Activated naive CD8-positive, alpha-beta T cell treated with anti-CD3 and anti-CD28 coated beads, Interleukin-2, amount 10 ng/mL, durations not matched to agents 7 days and 5 days (primary cell): ENCODE measurements at regions of chr4 and their contacts with region 1.

Region 1: GRCh38 chr4:25159884-25160713 is at the start of gene SEPSECS:
- DNase-seq: peak; percentile 87
- ATAC-seq: peak; percentile 87
- H3K4me3 Mint-ChIP-seq: peak within 1 kb of the TSS; percentile 95
- H3K27ac Mint-ChIP-seq: peak within 1 kb of the TSS; percentile 93
- H3K4me1 Mint-ChIP-seq: peaks cover 22% of the 10 kb centered on the region
- H3K27me3 Mint-ChIP-seq: no peaks in the 10 kb centered on the region
- total RNA-seq, gene SEPSECS: 15.1 to 15.5 TPM

Region 2: DNA sequence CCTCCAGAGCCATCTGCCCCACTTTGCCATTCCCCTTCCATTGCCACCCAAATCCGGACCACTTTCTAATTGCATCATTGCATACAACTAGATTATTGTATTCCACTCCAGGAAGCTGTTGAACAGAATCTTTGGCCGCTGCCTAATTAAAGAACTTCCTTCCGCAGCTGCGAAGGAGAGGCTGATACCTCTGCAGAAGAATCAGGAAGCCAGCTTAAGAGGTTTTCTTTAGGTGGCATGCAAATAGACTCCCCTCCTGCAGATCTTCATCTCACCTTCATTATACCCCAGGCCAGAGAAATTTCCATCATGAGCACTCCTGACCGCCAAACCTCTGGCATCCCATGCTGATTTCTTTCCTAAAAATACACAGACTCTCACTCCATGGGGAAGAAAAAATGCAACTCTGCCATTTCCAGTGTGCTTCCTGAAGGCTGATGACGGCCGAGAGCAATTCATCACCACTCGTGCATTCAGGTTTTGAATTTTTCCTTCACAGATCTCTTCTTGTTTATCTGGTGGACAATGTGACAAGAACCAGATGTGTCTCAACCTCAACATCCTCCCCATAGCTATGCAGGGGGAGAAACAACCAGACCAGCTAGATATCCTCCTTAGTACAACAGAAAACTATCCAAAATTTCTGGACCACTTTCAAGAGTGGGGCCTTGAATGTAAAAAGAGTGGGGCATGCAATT is 160.6 kb before region 1 on chr4:
- POLR2A ChIA-PET with region 1: no interaction called
- DNase-seq: no peak
- ATAC-seq: no peak
- H3K4me3 Mint-ChIP-seq: peak overlapping the region; percentile 4
- H3K27ac Mint-ChIP-seq: no peak overlapping the region
- H3K4me1 Mint-ChIP-seq: peaks cover 3% of the 10 kb centered on the region
- H3K27me3 Mint-ChIP-seq: peaks cover 15% of the 10 kb centered on the region

Region 3: DNA sequence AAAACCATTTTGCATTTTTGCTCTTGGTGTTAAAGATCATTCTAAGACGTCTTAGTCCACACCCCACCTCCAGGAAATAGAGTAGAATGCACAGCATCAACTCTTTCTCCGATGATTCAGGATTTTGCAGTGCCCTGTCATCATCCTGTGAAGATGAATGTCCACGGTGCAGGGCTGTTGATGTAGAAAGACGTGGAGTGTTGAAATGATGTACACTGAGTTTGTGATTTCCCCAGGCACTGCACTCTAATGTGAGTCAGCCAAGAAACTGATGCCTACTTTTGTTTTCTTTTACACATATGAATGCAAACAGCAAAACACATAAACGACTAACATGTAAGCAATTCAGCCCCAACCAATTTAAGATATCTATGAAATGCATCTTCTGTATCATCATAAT is 139.9 kb before region 1 on chr4:
- POLR2A ChIA-PET with region 1: no interaction called
- DNase-seq: no peak
- ATAC-seq: no peak
- H3K4me3 Mint-ChIP-seq: no peak overlapping the region
- H3K27ac Mint-ChIP-seq: no peak overlapping the region
- H3K4me1 Mint-ChIP-seq: no peaks in the 10 kb centered on the region
- H3K27me3 Mint-ChIP-seq: peaks cover 5% of the 10 kb centered on the region

Region 4: DNA sequence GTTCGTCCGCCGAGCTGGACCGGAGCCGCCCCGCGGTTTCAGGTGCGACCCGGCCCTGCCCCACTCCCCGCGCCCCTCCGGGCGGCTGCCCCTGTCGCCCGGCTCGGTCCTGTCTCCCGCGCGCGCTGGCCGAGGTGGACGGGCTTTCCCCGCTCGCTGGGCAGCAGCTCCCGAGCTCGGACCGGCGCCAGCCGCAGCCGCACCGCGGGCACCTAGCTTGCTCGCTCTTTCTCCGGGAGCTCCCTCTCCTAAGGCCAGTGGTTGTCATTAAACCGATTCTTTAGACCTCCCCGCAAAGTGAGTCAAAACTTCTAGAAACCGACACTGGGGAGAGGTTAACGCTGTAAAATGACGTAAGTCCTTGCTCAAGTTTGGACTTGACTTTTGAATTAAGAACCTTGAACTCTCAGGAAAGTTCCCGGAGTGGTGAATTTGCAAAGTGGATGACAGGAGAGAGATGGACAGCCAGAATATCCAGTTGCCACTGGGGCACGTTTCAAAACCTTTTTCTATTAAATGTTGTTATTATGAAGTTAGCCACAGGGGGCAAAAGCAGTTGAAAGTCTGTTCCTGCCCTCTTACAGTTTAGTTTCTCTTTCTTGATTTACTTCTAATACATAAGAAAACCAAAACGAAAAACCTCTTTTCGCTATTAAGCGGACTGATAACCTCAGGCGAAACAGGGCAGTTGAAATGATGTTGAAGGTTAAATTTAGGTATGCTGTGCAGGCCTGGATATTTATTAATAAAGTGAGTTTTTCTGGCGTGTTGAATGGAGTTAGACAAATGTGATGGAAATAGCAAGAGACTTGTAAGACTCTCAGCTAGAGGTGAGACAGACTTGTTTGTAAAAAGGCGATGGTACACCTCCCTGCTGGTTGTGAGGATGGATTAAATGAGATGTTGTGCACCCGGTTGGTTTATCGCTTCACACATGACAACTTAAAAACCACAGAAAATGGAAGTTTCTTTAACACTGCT is 74.6 kb after region 1 on chr4:
- POLR2A ChIA-PET with region 1: interaction called, 58 read pairs
- DNase-seq: no peak
- ATAC-seq: peak; percentile 28
- H3K4me3 Mint-ChIP-seq: peak overlapping the region; percentile 93
- H3K27ac Mint-ChIP-seq: peak overlapping the region; percentile 95
- H3K4me1 Mint-ChIP-seq: peaks cover 33% of the 10 kb centered on the region
- H3K27me3 Mint-ChIP-seq: no peaks in the 10 kb centered on the region

Region 5: GRCh38 chr4:25376754-25377571 is 216.9 kb after region 1 on chr4 and contains the start of gene ANAPC4:
- POLR2A ChIA-PET with region 1: interaction called, 13 read pairs
- DNase-seq: peak; percentile 98
- ATAC-seq: peak; percentile 94
- H3K4me3 Mint-ChIP-seq: no peak within 1 kb of the TSS
- H3K27ac Mint-ChIP-seq: peak within 1 kb of the TSS; percentile 93
- H3K4me1 Mint-ChIP-seq: peaks cover 8% of the 10 kb centered on the region
- H3K27me3 Mint-ChIP-seq: no peaks in the 10 kb centered on the region
- total RNA-seq, gene ANAPC4: 49.8 to 52.8 TPM